ENCODE measurements at regions of chr7 and their contacts with region 1.

Region 1: GRCh38 chr7:28853834-28854749 is 104.0 kb downstream of the TRIL start:
- DNase-seq: peak; percentile 52 to 88 (median 71)
- H3K4me3 ChIP-seq: peak overlapping the region in 2 of 4 donors; percentile 16 to 56
- H3K27ac ChIP-seq: no peak overlapping the region
- H3K4me1 ChIP-seq: peaks cover 5 to 11% of the 10 kb centered on the region in 2 donors
- H3K27me3 ChIP-seq: peaks cover 32% of the 10 kb centered on the region
- CTCF ChIP-seq: peak; percentile 66 to 89 (median 79)
- POLR2A ChIP-seq: no peak

Region 2: DNA sequence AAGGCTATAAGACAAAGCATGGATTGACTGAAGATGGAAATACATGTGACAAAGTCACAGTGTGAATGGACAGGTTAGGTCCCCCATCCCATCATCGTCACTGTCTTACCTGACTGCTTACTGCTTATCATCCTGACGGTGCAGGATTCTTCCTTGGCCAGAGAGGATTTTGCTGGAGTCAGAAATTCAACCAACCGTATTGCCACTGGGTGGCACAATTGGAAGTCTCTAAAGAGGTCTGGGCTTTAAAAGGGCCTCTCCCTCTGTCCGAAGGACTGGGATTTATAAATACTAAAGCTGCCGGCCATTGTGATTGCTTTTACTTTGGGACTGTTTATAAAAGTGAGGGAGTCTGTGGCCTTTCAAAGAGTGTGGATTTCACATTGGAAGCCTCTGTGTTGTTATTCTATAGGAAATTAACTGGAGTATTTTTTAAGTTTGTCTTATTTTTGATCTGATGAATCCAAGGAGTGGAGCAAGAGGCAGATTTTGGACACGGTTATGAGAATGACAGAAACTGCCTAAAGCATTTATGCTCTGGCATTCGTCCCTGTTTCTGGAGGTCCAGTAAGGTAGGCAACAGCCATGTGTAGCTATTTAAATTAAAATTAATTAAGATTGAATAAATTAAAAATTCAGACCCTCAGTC is 555.1 kb before region 1 on chr7:
- intact Hi-C with region 1: loop called in 1 of 2 experiments (anchors 5 kb)
- DNase-seq: peak; percentile 21 to 78 (median 50)
- H3K4me3 ChIP-seq: no peak overlapping the region
- H3K27ac ChIP-seq: no peak overlapping the region
- H3K4me1 ChIP-seq: peaks cover 0 to 9% of the 10 kb centered on the region in 2 donors
- H3K27me3 ChIP-seq: no peaks in the 10 kb centered on the region
- CTCF ChIP-seq: peak; percentile 30 to 61 (median 48)
- POLR2A ChIP-seq: no peak